Natural killer cell (primary cell): ENCODE measurements at regions of chr6 and their contacts with region 1.

Region 1: GRCh38 chr6:32195652-32195901 is 3.1 kb upstream of the GPSM3 start:
- DNase-seq: peak; percentile 99
- ATAC-seq: peak; percentile 79 to 94 (median 82)
- H3K4me3 ChIP-seq: no peak overlapping the region
- H3K4me3 Mint-ChIP-seq: peak overlapping the region; percentile 98
- H3K27ac ChIP-seq: peak overlapping the region; percentile 100
- H3K27ac Mint-ChIP-seq: peak overlapping the region; percentile 99
- H3K4me1 ChIP-seq: peaks cover 61% of the 10 kb centered on the region
- H3K4me1 Mint-ChIP-seq: peaks cover 46 to 67% of the 10 kb centered on the region in 2 donors
- H3K27me3 ChIP-seq: no peaks in the 10 kb centered on the region
- H3K27me3 Mint-ChIP-seq: no peaks in the 10 kb centered on the region
- CTCF ChIP-seq: peak; percentile 36

Region 2: DNA sequence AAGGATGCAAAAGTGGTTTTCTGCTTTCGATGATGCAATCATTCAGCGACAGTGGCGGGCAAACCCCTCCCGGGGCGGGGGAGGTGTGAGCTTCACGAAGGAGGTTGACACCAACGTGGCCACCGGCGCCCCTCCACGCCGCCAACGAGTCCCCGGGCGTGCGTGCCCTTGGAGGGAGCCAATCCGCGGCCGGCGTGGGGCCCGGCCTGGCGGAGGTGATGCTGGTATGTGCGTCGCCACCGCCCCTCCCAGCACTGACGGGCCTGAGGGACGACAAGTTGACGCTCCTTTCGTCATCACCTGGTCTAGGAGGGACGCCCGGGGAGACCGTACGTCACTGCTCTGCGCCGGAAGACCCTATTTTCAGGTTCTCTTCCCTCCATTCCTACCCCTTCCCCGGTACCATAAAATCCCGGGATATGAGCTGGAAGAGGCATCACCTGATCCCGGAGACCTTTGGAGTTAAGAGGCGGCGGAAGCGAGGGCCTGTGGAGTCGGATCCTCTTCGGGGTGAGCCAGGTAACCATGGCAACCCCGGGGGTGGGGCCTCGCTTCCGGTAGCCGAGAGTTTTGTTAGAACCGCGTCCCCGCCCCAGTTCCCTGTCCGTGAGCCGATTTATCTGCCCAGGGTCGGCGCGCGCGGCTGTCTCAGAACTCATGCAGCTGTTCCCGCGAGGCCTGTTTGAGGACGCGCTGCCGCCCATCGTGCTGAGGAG is 223.4 kb before region 1 on chr6 and contains the start of gene DXO:
- intact Hi-C with region 1: loop called (anchors 10 kb)
- DNase-seq: peak; percentile 99
- ATAC-seq: peak; percentile 89 to 98 (median 92)
- H3K4me3 ChIP-seq: peak within 1 kb of the TSS; percentile 83
- H3K4me3 Mint-ChIP-seq: peak within 1 kb of the TSS; percentile 93
- H3K27ac ChIP-seq: peak within 1 kb of the TSS; percentile 98
- H3K27ac Mint-ChIP-seq: peak within 1 kb of the TSS; percentile 93 to 97
- H3K4me1 ChIP-seq: peaks cover 23% of the 10 kb centered on the region
- H3K4me1 Mint-ChIP-seq: peaks cover 20 to 39% of the 10 kb centered on the region in 2 donors
- H3K27me3 ChIP-seq: no peaks in the 10 kb centered on the region
- H3K27me3 Mint-ChIP-seq: no peaks in the 10 kb centered on the region
- CTCF ChIP-seq: no peak
- total RNA-seq, gene DXO: 37.9 to 54.3 (median 49.0) TPM

Region 3: GRCh38 chr6:32127717-32128592 is 67.6 kb before region 1 on chr6 and contains the start of gene ATF6B:
- intact Hi-C with region 1: loop called (anchors 1 kb)
- DNase-seq: peak; percentile 91 to 100
- ATAC-seq: peak; percentile 92 to 99 (median 96)
- H3K4me3 ChIP-seq: peak within 1 kb of the TSS; percentile 98
- H3K4me3 Mint-ChIP-seq: peak within 1 kb of the TSS; percentile 94
- H3K27ac ChIP-seq: peak within 1 kb of the TSS; percentile 85
- H3K27ac Mint-ChIP-seq: peak within 1 kb of the TSS; percentile 93 to 98
- H3K4me1 ChIP-seq: peaks cover 37% of the 10 kb centered on the region
- H3K4me1 Mint-ChIP-seq: peaks cover 51 to 56% of the 10 kb centered on the region in 2 donors
- H3K27me3 ChIP-seq: no peaks in the 10 kb centered on the region
- H3K27me3 Mint-ChIP-seq: no peaks in the 10 kb centered on the region
- CTCF ChIP-seq: no peak
- total RNA-seq, gene ATF6B: 157 to 187 (median 178) TPM

Region 4: GRCh38 chr6:32558426-32559057 is 363.0 kb after region 1 on chr6:
- intact Hi-C with region 1: no loop called
- DNase-seq: no peak
- ATAC-seq: no peak
- H3K4me3 ChIP-seq: no peak overlapping the region
- H3K4me3 Mint-ChIP-seq: no peak overlapping the region
- H3K27ac ChIP-seq: no peak overlapping the region
- H3K27ac Mint-ChIP-seq: no peak overlapping the region
- H3K4me1 ChIP-seq: no peaks in the 10 kb centered on the region
- H3K4me1 Mint-ChIP-seq: peaks cover 0 to 6% of the 10 kb centered on the region in 2 donors
- H3K27me3 ChIP-seq: no peaks in the 10 kb centered on the region
- H3K27me3 Mint-ChIP-seq: peaks cover 0 to 21% of the 10 kb centered on the region in 2 donors
- CTCF ChIP-seq: no peak

Region 5: GRCh38 chr6:32843979-32844838 is 648.6 kb after region 1 on chr6 and contains the start of gene PSMB8:
- intact Hi-C with region 1: loop called (anchors 5 kb)
- DNase-seq: peak; percentile 98 to 99
- ATAC-seq: peak; percentile 81 to 93 (median 85)
- H3K4me3 ChIP-seq: peak within 1 kb of the TSS; percentile 97
- H3K4me3 Mint-ChIP-seq: peak within 1 kb of the TSS; percentile 100
- H3K27ac ChIP-seq: peak within 1 kb of the TSS; percentile 99
- H3K27ac Mint-ChIP-seq: peak within 1 kb of the TSS; percentile 96 to 100
- H3K4me1 ChIP-seq: peaks cover 72% of the 10 kb centered on the region
- H3K4me1 Mint-ChIP-seq: peaks cover 90 to 97% of the 10 kb centered on the region in 2 donors
- H3K27me3 ChIP-seq: no peaks in the 10 kb centered on the region
- H3K27me3 Mint-ChIP-seq: no peaks in the 10 kb centered on the region
- CTCF ChIP-seq: no peak
- total RNA-seq, gene PSMB8: 160 to 170 (median 161) TPM